IMR-90 (cell line): ENCODE measurements at regions of chrX and their contacts with region 1.

Region 1: GRCh38 chrX:151478058-151478457 is 81.1 kb downstream of the VMA21 start:
- DNase-seq: no peak
- ATAC-seq: no peak
- H3K4me3 ChIP-seq: no peak overlapping the region
- H3K27ac ChIP-seq: no peak overlapping the region
- H3K4me1 ChIP-seq: no peaks in the 10 kb centered on the region
- H3K27me3 ChIP-seq: no peaks in the 10 kb centered on the region
- CTCF ChIP-seq: no peak
- POLR2A ChIP-seq: no peak
- RAD21 ChIP-seq: no peak

Region 2: DNA sequence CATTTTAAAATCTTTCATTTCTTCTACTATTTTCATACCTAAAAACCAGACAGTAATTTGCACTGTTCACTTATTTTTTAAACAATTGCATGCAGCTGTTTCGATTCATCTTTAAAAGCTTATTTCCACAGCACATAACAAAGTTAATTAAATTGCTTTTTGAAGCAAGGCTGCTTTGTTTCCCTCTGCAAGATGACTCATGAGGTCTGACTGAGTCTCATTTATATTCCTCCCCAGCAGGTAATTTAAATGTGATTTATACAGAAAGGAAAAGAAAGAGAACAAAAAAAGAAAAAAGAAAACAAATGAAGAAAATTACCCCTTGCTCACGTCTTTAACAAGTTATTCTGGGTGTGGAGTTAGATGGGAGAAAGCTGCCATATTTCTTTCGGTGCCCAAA is 58.3 kb before region 1 on chrX:
- CTCF ChIA-PET with region 1: no interaction called
- POLR2A ChIA-PET with region 1: no interaction called
- dilution Hi-C with region 1: no loop called
- in situ Hi-C with region 1: loop called (anchors 10 kb)
- intact Hi-C with region 1: no loop called
- DNase-seq: no peak
- ATAC-seq: no peak
- H3K4me3 ChIP-seq: no peak overlapping the region
- H3K27ac ChIP-seq: no peak overlapping the region
- H3K4me1 ChIP-seq: no peaks in the 10 kb centered on the region
- H3K27me3 ChIP-seq: no peaks in the 10 kb centered on the region
- CTCF ChIP-seq: no peak
- POLR2A ChIP-seq: no peak
- RAD21 ChIP-seq: no peak

Region 3: GRCh38 chrX:151516538-151517187 is 38.6 kb after region 1 on chrX:
- CTCF ChIA-PET with region 1: no interaction called
- POLR2A ChIA-PET with region 1: no interaction called
- dilution Hi-C with region 1: no loop called
- in situ Hi-C with region 1: no loop called
- intact Hi-C with region 1: no loop called
- DNase-seq: no peak
- ATAC-seq: no peak
- H3K4me3 ChIP-seq: no peak overlapping the region
- H3K27ac ChIP-seq: no peak overlapping the region
- H3K4me1 ChIP-seq: no peaks in the 10 kb centered on the region
- H3K27me3 ChIP-seq: no peaks in the 10 kb centered on the region
- CTCF ChIP-seq: no peak
- POLR2A ChIP-seq: no peak
- RAD21 ChIP-seq: no peak